Heart right ventricle (tissue), 16 donors: ENCODE measurements at regions of chr12 and their contacts with region 1.

Region 1: DNA sequence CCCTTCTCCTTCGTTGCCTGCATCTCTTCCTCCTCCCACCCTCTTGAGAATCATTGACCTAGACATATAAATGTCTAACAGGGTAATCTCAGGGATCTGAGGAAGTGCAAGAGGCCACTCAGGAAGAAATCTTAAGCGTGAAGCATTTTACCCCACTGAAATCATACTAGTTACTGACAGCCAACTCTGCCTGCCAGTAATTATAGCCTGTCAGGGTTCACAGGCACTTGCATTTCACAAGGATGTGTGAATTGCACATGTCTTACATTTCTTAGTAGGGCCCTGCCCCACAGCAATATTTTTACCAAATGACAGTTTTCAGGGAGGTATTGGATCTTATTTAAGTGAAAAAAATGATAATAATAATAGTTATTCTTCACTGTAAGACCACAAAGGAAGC is 127.2 kb downstream of the SLC15A5 start:
- DNase-seq: no peak
- ATAC-seq: no peak
- H3K4me3 ChIP-seq: no peak overlapping the region
- H3K27ac ChIP-seq: no peak overlapping the region
- H3K4me1 ChIP-seq: peaks cover 0 to 7% (median 0%) of the 10 kb centered on the region in 9 donors
- H3K27me3 ChIP-seq: peaks cover 0 to 4% (median 0%) of the 10 kb centered on the region in 7 donors
- CTCF ChIP-seq: no peak

Region 2: DNA sequence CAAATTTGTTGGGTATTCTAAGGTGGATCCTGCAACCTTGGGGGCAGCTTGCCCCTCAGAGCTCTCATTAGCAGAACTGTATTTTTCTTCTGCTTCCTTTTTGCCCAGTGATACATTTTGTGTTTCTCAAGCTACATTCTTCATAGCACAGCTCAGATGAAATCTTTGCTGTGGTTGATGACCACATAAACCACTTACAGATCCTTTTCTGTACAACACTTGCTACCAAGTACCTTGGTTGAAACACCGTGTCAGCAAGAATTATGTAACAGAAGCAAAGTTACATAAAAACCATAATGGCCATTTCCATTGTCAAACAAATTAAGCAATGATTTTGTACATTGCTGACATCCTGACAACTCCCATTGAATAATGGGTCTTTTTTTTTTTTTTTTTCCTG is 1572.9 kb before region 1 on chr12:
- intact Hi-C with region 1: loop called in 1 of 10 experiments (anchors 5 kb)
- DNase-seq: no peak
- ATAC-seq: no peak
- H3K4me3 ChIP-seq: no peak overlapping the region
- H3K27ac ChIP-seq: no peak overlapping the region
- H3K4me1 ChIP-seq: peaks cover 0 to 41% (median 4%) of the 10 kb centered on the region in 9 donors
- H3K27me3 ChIP-seq: no peaks in the 10 kb centered on the region
- CTCF ChIP-seq: no peak

Region 3: GRCh38 chr12:16187660-16188059 is 37.4 kb after region 1 on chr12:
- intact Hi-C with region 1: no loop called
- DNase-seq: no peak
- ATAC-seq: no peak
- H3K4me3 ChIP-seq: no peak overlapping the region
- H3K27ac ChIP-seq: no peak overlapping the region
- H3K4me1 ChIP-seq: no peaks in the 10 kb centered on the region
- H3K27me3 ChIP-seq: peaks cover 0 to 6% (median 0%) of the 10 kb centered on the region in 7 donors
- CTCF ChIP-seq: no peak